Kidney (tissue), 22 donors: ENCODE measurements at regions of chr7 and their contacts with region 1.

Region 1: GRCh38 chr7:128209229-128210035 is 31.6 kb upstream of the LEP start:
- DNase-seq: peak; percentile 80 to 92 (median 85)
- H3K4me3 ChIP-seq: no peak overlapping the region
- H3K27ac ChIP-seq: no peak overlapping the region
- H3K4me1 ChIP-seq: peaks cover 0 to 2% (median 0%) of the 10 kb centered on the region in 3 donors
- H3K27me3 ChIP-seq: no peaks in the 10 kb centered on the region
- CTCF ChIP-seq: peak; percentile 100

Region 2: GRCh38 chr7:127713758-127714157 is 495.7 kb before region 1 on chr7:
- intact Hi-C with region 1: loop called (anchors 5 kb)
- DNase-seq: no peak
- H3K4me3 ChIP-seq: no peak overlapping the region
- H3K27ac ChIP-seq: no peak overlapping the region
- H3K4me1 ChIP-seq: no peaks in the 10 kb centered on the region
- H3K27me3 ChIP-seq: no peaks in the 10 kb centered on the region
- CTCF ChIP-seq: no peak

Region 3: DNA sequence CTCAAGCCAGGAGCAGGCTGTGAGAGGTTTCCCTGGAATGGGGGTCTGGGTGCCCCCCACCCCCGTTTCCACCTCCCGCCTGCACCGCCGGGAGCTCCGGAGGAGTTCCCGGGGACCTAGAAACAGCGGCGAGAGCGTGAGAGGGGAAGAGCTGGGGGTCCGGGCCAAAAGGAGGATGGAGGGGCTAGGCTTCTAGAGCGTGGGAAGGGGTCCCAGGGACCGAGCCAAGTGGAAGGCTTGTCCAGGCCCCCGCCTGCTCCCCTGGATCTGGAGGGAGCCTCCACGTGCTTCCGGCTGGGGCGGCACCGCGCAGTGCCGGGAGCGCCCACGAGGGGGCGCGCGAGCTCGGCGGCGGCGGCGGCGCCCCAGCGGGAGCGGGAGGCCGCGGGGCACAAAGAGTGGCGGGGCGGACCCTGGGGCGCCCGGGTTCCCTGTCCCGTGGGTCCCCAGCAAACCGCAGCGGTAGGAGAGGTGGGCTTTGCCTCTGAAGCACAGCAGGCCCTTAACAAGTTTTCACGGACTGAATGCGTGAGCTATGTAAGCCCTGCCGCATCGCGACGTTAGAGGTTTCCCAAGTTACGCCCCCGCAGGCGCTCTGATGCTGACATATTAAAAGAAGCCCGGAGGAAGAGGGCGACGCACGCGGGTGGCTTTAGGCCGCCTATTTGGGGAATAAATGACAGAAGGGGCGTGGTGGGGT is 73.8 kb before region 1 on chr7:
- intact Hi-C with region 1: loop called (anchors 10 kb)
- DNase-seq: peak; percentile 56 to 77 (median 71)
- H3K4me3 ChIP-seq: peak overlapping the region; percentile 61 to 68 (median 61)
- H3K27ac ChIP-seq: no peak overlapping the region
- H3K4me1 ChIP-seq: peaks cover 0 to 10% (median 5%) of the 10 kb centered on the region in 3 donors
- H3K27me3 ChIP-seq: peaks cover 17% of the 10 kb centered on the region
- CTCF ChIP-seq: peak; percentile 89